ENCODE measurements at regions of chr17 and their contacts with region 1.

Region 1: GRCh38 chr17:79915850-79916430 is 76.7 kb upstream of the CBX4 start:
- DNase-seq: peak; percentile 28
- ATAC-seq: peak; percentile 64
- H3K4me3 ChIP-seq: no peak overlapping the region
- H3K27ac ChIP-seq: no peak overlapping the region
- H3K4me1 ChIP-seq: no peaks in the 10 kb centered on the region; the same call in 1 of the 2 replicates
- H3K27me3 ChIP-seq: peaks cover 67% of the 10 kb centered on the region
- CTCF ChIP-seq: peak; percentile 47
- POLR2A ChIP-seq: no peak
- RAD21 ChIP-seq: peak; percentile 63

Region 2: GRCh38 chr17:79749156-79749815 is 166.7 kb before region 1 on chr17:
- CTCF ChIA-PET with region 1: no interaction called
- POLR2A ChIA-PET with region 1: no interaction called
- dilution Hi-C with region 1: no loop called
- in situ Hi-C with region 1: loop called (anchors 10 kb)
- intact Hi-C with region 1: loop called (anchors 1 kb)
- DNase-seq: peak; percentile 73
- ATAC-seq: peak; percentile 55
- H3K4me3 ChIP-seq: no peak overlapping the region
- H3K27ac ChIP-seq: no peak overlapping the region
- H3K4me1 ChIP-seq: peaks cover 3% of the 10 kb centered on the region; the same call in 1 of the 2 replicates
- H3K27me3 ChIP-seq: peaks cover 49% of the 10 kb centered on the region
- CTCF ChIP-seq: no peak
- POLR2A ChIP-seq: no peak
- RAD21 ChIP-seq: no peak

Region 3: GRCh38 chr17:79789534-79790353 is 126.2 kb before region 1 on chr17:
- CTCF ChIA-PET with region 1: no interaction called
- POLR2A ChIA-PET with region 1: no interaction called
- dilution Hi-C with region 1: no loop called
- in situ Hi-C with region 1: loop called (anchors 10 kb)
- intact Hi-C with region 1: no loop called
- DNase-seq: no peak
- ATAC-seq: peak; percentile 37
- H3K4me3 ChIP-seq: no peak overlapping the region; the same call in 1 of the 2 replicates
- H3K27ac ChIP-seq: no peak overlapping the region
- H3K4me1 ChIP-seq: peaks cover 7% of the 10 kb centered on the region
- H3K27me3 ChIP-seq: peaks cover 37% of the 10 kb centered on the region
- CTCF ChIP-seq: peak; percentile 81
- POLR2A ChIP-seq: no peak
- RAD21 ChIP-seq: peak; percentile 84

Region 4: DNA sequence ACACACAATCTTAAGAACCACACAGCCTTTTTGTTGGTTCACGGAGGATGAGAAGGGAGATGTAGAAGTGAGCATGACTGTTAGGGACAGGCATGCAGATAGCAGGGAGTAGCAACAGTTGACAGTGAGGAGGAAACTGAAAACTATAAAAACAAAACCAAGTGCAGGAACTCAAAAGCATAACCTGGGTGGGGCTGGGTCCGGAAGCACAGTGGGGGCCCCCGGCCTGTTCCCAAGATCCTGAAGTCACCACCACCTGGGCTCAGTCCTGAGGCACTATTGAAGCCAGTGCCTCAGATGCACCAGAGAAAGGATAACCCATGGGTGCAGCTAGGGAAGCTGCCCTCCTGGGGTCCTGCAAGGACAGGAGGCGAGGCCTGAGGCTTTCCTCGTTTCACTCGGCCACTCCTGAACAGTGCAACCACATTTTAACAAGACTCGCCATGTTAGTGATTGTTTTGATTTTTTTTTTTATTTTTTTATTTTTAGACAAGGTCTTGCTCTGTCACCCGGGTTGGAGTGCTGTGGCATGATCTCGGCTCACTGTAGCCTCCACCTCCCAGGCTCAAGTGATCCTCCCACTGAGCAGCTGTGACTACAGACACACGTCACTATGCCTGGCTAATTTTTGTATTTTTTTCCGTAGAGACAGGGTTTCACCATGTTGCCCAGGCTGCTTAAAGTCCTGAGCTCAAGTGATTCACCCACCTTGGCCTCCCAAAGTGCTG is 49.0 kb before region 1 on chr17:
- CTCF ChIA-PET with region 1: no interaction called
- POLR2A ChIA-PET with region 1: no interaction called
- dilution Hi-C with region 1: no loop called
- in situ Hi-C with region 1: loop called (anchors 5 kb)
- intact Hi-C with region 1: no loop called
- DNase-seq: peak; percentile 33
- ATAC-seq: no peak
- H3K4me3 ChIP-seq: no peak overlapping the region
- H3K27ac ChIP-seq: no peak overlapping the region
- H3K4me1 ChIP-seq: no peaks in the 10 kb centered on the region
- H3K27me3 ChIP-seq: peaks cover 40% of the 10 kb centered on the region
- CTCF ChIP-seq: no peak
- POLR2A ChIP-seq: no peak
- RAD21 ChIP-seq: no peak

Region 5: DNA sequence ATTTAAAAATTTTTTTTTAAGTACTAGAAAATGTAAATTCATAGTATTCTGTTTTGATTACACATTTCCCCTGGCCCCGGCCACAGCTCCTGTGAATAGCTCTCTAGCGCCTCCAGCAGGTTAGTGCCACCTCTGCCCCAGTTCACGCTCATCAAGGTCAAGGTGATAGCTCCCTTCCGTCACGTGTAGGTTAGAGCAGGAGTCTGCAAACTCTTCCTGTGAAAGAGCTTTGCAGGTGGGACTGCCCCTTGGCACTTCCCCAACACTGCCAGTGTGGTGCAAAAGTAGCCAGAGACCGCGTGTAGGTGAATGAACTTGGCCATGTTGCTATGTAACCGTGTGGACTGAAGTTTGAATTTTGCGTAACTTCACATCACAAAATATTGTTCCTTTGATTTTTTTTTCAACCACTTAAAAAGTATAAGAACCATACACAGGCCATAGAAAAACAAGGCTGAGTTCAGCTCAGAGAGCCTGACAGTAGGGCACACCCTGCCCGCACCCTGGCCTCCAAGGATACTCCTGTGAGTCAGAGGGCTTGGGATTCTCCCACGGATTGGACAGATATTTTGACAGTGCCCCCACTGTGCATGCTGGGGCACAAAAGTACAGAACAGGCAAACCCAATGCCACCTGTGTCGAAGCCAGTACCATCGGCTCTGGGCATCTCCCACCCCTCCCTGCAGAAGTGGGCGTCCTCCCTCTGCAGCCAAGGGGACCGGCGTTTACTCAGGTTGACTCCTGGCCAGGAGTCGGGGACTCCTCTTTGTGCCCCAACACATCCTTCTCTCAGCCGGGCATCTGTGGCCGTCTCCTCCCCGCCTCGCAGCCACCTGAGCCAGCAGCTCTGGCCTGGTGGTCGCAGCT is 983.7 kb after region 1 on chr17:
- CTCF ChIA-PET with region 1: no interaction called
- POLR2A ChIA-PET with region 1: no interaction called
- dilution Hi-C with region 1: no loop called
- in situ Hi-C with region 1: no loop called
- intact Hi-C with region 1: no loop called
- DNase-seq: peak; percentile 16
- ATAC-seq: peak; percentile 53; the same call in 1 of the 2 replicates
- H3K4me3 ChIP-seq: no peak overlapping the region
- H3K27ac ChIP-seq: no peak overlapping the region
- H3K4me1 ChIP-seq: no peaks in the 10 kb centered on the region
- H3K27me3 ChIP-seq: no peaks in the 10 kb centered on the region
- CTCF ChIP-seq: peak; percentile 65
- POLR2A ChIP-seq: no peak
- RAD21 ChIP-seq: peak; percentile 83